Sigmoid colon (tissue), 7 donors: ENCODE measurements at regions of chr19 and their contacts with region 1.

Region 1: DNA sequence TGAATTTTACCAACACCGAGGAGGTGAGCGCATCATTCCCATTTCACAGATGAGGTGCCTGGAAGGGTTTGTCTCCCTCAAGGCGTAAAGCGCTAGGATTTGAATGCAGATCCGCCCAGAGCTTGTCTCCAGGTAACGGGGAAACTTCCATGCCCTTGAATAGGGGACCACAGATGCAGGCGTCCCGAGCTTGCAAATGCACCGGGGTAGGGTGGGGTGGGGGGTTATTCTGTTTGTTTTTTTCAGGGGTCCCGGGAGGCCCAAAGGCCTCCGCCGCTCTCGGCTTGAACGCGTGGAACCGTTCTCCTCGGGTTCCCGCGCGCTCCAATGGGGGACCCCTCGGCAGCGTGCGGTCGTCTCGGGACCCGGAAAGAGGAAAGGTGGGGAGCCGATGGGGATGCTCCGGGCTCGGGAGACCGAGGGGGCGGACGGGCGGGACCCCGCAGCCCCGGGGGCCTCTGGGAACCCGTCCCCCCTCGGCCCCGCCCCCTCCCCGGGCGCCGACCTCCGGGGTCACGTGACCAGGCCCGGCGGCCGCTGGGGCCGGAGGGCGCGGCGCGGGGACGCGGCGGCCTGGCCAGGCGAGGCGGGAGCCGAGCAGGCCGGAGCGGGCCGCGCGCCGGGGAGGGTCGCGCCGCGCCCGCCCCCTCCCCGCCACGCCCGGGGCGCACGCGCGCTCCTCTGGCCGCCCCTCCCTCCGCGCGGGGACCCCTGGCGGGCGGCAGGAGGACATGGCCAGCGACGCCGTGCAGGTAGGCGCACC is at the start of gene PKN1:
- DNase-seq: no peak
- H3K4me3 ChIP-seq: peak within 1 kb of the TSS; percentile 65 to 98 (median 86)
- H3K27ac ChIP-seq: peak within 1 kb of the TSS; percentile 88 to 92 (median 90)
- H3K4me1 ChIP-seq: peaks cover 0 to 45% (median 27%) of the 10 kb centered on the region in 4 donors
- H3K27me3 ChIP-seq: no peaks in the 10 kb centered on the region
- CTCF ChIP-seq: no peak
- EP300 ChIP-seq: no peak
- POLR2A ChIP-seq: no peak
- total RNA-seq, gene PKN1: 79.2 to 126 (median 84.6) TPM

Region 2: GRCh38 chr19:14449366-14449765 is 16.4 kb after region 1 on chr19:
- intact Hi-C with region 1: no loop called
- DNase-seq: no peak
- H3K4me3 ChIP-seq: no peak overlapping the region
- H3K27ac ChIP-seq: no peak overlapping the region
- H3K4me1 ChIP-seq: no peaks in the 10 kb centered on the region
- H3K27me3 ChIP-seq: no peaks in the 10 kb centered on the region
- CTCF ChIP-seq: no peak
- EP300 ChIP-seq: no peak
- POLR2A ChIP-seq: no peak

Region 3: DNA sequence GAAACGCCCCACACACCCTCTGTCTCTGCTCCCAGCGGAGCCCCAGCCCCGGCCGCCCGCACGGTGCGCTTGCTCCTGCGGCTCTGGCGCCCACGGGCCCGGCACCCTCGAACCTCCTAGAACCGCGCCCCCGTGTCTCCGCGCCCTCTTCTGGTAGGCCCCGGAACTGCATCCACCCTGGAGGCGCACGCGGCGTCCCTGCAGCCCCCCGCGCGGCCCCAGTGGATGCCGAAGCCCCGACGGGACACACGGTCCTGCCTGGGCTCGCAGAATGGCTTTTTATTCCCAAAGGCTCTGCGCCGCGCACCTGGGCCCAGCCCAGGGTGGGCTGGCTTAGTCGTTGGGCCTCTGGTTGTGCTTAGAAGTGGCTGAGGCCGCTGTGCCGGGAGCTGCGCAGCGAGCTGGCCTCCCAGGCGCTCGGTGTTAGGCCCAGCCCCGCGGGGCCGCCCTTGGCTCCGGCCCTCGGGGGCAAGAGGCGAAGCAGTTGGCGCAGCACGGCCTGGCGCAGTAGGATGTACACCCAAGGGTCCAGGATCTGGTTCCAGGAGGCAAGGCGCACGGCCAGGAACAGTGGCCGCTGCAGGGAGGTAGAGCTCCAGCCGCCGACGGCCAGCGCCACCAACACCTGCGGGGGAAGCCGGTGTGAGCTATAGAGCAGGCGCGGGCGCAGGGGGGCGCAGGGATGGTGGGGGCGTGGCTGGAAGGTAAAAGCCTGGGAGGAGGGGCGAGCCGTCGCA is 39.4 kb after region 1 on chr19:
- intact Hi-C with region 1: loop called (anchors 2 kb)
- DNase-seq: no peak
- H3K4me3 ChIP-seq: peak overlapping the region in 2 of 4 donors; percentile 7 to 32
- H3K27ac ChIP-seq: no peak overlapping the region
- H3K4me1 ChIP-seq: peaks cover 0 to 49% (median 41%) of the 10 kb centered on the region in 4 donors
- H3K27me3 ChIP-seq: peaks cover 18 to 39% (median 33%) of the 10 kb centered on the region in 3 donors
- CTCF ChIP-seq: peak; percentile 83 to 99 (median 94)
- EP300 ChIP-seq: no peak
- POLR2A ChIP-seq: no peak